ENCODE measurements at regions of chrX and their contacts with region 1.

Region 1: DNA sequence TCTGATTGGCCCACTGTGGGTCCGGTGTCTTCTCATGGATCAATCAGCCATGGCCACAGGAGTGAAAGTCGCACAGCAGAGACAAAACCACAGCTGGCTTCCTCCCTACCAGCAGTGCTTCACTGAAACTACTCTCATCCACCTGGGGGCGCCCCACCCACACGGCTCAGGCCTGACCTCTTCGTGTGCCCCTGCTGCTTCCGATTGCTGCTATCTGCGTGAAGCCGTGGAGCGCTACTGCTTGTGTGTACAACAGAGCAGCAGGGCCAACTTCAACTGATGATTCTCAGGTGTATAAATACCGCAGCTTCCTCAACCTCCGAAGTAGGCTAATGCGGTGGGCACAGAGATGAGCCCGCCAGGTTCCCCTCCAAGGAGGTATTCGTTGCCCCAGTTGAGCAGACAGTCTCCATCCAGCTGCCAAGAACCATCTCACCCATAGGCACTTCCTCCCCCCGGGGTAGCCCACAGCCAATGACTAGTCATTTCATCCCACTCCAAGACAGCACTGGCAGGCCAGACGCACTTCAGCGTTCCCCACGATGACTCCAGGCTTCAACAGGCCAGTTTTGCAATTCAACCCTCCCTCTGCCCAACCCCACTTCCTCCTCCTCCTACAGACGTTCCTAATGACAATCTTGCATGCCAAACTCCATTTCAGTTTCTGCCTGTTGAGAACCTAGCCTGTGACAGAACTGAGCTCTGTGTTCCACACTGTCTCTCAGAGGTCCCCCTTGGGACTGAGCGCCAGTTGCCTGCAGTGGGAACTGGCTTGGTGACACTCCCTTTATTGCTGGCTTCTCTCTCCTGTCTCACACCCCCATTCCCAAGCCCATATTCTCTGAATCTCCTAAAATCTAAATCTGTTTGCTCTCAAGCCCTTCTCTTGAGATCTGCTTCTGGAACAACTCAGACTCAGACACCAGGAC is 41.3 kb upstream of the ATP6AP2 start:
- DNase-seq: peak; percentile 68 to 78 (median 73)
- H3K4me3 ChIP-seq: no peak overlapping the region
- H3K4me3 Mint-ChIP-seq: peak overlapping the region in 7 of 8 donors; percentile 26 to 68 (median 56)
- H3K27ac ChIP-seq: no peak overlapping the region
- H3K27ac Mint-ChIP-seq: peak overlapping the region; percentile 29 to 87 (median 77)
- H3K4me1 ChIP-seq: peaks cover 12% of the 10 kb centered on the region
- H3K4me1 Mint-ChIP-seq: peaks cover 12 to 20% (median 17%) of the 10 kb centered on the region in 4 donors
- H3K27me3 ChIP-seq: no peaks in the 10 kb centered on the region
- H3K27me3 Mint-ChIP-seq: no peaks in the 10 kb centered on the region

Region 2: GRCh38 chrX:40552768-40553167 is 13.3 kb after region 1 on chrX:
- CTCF ChIA-PET with region 1: interaction called, 11 read pairs
- POLR2A ChIA-PET with region 1: no interaction called
- intact Hi-C with region 1: no loop called
- DNase-seq: no peak
- H3K4me3 ChIP-seq: no peak overlapping the region
- H3K4me3 Mint-ChIP-seq: no peak overlapping the region
- H3K27ac ChIP-seq: no peak overlapping the region
- H3K27ac Mint-ChIP-seq: no peak overlapping the region
- H3K4me1 ChIP-seq: no peaks in the 10 kb centered on the region
- H3K4me1 Mint-ChIP-seq: no peaks in the 10 kb centered on the region
- H3K27me3 ChIP-seq: no peaks in the 10 kb centered on the region
- H3K27me3 Mint-ChIP-seq: no peaks in the 10 kb centered on the region

Region 3: DNA sequence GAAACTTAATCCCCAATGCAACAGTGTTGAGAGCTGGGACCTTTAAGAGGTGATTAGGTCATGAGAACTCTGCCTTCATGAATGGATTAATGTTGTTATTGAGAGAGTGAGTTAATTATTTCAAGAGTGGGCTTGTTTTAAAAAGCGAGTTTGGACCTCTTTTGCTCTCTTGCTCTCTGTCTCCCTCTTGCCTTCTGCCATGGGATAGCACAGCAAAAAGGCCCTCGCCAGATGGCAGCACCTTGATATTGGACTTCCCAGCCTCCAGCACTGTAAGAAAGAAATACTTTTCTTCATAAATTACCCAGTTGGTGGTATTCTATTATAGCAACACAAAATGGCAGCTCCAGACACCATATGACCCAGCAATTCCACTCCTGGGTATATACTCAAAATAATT is 34.3 kb after region 1 on chrX:
- CTCF ChIA-PET with region 1: interaction called, 8 read pairs
- POLR2A ChIA-PET with region 1: no interaction called
- intact Hi-C with region 1: loop called (anchors 5 kb)
- DNase-seq: peak; percentile 23 to 51 (median 42)
- H3K4me3 ChIP-seq: no peak overlapping the region
- H3K4me3 Mint-ChIP-seq: no peak overlapping the region
- H3K27ac ChIP-seq: no peak overlapping the region
- H3K27ac Mint-ChIP-seq: no peak overlapping the region
- H3K4me1 ChIP-seq: no peaks in the 10 kb centered on the region
- H3K4me1 Mint-ChIP-seq: peaks cover 3 to 12% (median 7%) of the 10 kb centered on the region in 4 donors
- H3K27me3 ChIP-seq: no peaks in the 10 kb centered on the region
- H3K27me3 Mint-ChIP-seq: no peaks in the 10 kb centered on the region

Region 4: DNA sequence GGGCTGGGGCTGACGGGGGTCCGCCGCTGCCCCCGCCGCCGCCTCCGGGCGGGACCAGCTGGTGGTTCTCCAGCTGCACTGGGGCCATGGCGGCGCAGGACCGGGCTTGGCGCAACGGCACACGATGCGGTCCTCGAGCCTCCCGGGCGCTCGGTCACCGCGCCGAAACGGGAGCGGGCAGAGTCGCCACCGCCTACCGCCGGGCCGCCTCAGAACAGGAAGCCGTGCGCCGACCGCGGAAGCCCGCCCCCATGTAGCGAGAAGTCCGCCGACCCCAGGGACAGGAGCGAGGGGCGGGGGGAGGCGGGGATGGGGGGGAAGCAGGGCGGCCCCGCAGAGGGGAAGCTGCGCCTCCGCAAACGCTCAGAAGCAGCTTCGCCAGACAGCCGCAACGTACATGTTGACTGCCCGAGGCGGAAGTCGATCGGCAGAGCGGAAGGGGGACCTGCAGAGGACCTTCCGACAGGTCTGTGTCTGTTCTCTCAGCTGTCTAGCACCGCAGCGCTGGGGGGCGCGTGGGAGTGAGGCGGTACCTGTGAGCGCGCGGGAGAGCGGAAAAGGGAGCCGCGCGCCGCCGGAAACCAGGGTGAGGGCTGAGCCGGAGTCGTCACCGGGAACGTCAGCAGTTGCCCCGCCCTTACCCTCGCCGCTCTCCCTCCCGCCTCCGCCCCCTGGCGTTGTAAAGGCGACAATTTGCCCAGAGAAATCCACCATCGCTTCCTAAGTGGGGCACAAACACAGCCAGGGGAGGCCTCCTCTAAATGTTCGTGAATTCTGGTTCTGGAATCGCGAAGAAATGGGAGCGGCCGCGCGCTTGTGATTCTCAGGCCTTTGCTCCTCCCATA is 196.1 kb after region 1 on chrX and contains the start of gene MED14:
- CTCF ChIA-PET with region 1: interaction called, 3 read pairs
- POLR2A ChIA-PET with region 1: no interaction called
- intact Hi-C with region 1: loop called (anchors 1 kb)
- DNase-seq: peak; percentile 95 to 96 (median 96)
- H3K4me3 ChIP-seq: peak within 1 kb of the TSS; percentile 52 to 73
- H3K4me3 Mint-ChIP-seq: peak within 1 kb of the TSS; percentile 93 to 98 (median 97)
- H3K27ac ChIP-seq: peak within 1 kb of the TSS; percentile 94
- H3K27ac Mint-ChIP-seq: peak within 1 kb of the TSS; percentile 97 to 100 (median 99)
- H3K4me1 ChIP-seq: peaks cover 28% of the 10 kb centered on the region
- H3K4me1 Mint-ChIP-seq: peaks cover 23 to 76% (median 43%) of the 10 kb centered on the region in 4 donors
- H3K27me3 ChIP-seq: no peaks in the 10 kb centered on the region
- H3K27me3 Mint-ChIP-seq: no peaks in the 10 kb centered on the region
- total RNA-seq, gene MED14: 37.9 to 39.0 TPM

Region 5: GRCh38 chrX:40792433-40792832 is 253.0 kb after region 1 on chrX:
- CTCF ChIA-PET with region 1: interaction called, 43 read pairs
- POLR2A ChIA-PET with region 1: no interaction called
- intact Hi-C with region 1: loop called (anchors 1 kb)
- DNase-seq: no peak
- H3K4me3 ChIP-seq: no peak overlapping the region
- H3K4me3 Mint-ChIP-seq: no peak overlapping the region
- H3K27ac ChIP-seq: no peak overlapping the region
- H3K27ac Mint-ChIP-seq: no peak overlapping the region
- H3K4me1 ChIP-seq: no peaks in the 10 kb centered on the region
- H3K4me1 Mint-ChIP-seq: peaks cover 0 to 7% (median 3%) of the 10 kb centered on the region in 4 donors
- H3K27me3 ChIP-seq: no peaks in the 10 kb centered on the region
- H3K27me3 Mint-ChIP-seq: peaks cover 3 to 4% of the 10 kb centered on the region in 2 donors

Region 6: GRCh38 chrX:41116948-41117347 is 577.5 kb after region 1 on chrX:
- CTCF ChIA-PET with region 1: interaction called, 3 read pairs
- POLR2A ChIA-PET with region 1: no interaction called
- intact Hi-C with region 1: loop called (anchors 10 kb)
- DNase-seq: peak; percentile 44 to 57 (median 50)
- H3K4me3 ChIP-seq: no peak overlapping the region
- H3K4me3 Mint-ChIP-seq: peak overlapping the region; percentile 46 to 80 (median 62)
- H3K27ac ChIP-seq: peak overlapping the region; percentile 26
- H3K27ac Mint-ChIP-seq: peak overlapping the region; percentile 2 to 90 (median 59)
- H3K4me1 ChIP-seq: peaks cover 82% of the 10 kb centered on the region
- H3K4me1 Mint-ChIP-seq: peaks cover 45 to 81% (median 63%) of the 10 kb centered on the region in 4 donors
- H3K27me3 ChIP-seq: no peaks in the 10 kb centered on the region
- H3K27me3 Mint-ChIP-seq: no peaks in the 10 kb centered on the region

Region 7: DNA sequence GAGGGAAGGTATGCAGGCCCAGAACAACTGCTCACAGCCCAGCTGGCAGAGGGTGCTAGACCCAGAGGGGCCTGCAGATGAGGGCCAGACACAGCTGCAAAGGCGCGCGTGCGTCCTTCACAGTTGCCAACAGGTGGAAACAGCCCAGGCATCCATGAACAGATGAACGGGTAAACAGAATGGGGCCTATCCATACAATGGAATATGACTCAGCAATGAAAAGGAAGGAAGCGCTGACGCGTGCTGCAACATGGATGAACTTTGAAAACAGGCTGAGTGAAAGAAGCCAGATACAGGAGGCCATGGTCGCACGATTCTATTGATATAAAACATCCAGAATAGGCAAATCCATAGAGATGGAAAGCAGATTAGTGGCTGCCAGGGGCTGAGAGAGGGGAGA is 711.4 kb after region 1 on chrX:
- CTCF ChIA-PET with region 1: no interaction called
- POLR2A ChIA-PET with region 1: no interaction called
- intact Hi-C with region 1: loop called (anchors 5 kb)
- DNase-seq: no peak
- H3K4me3 ChIP-seq: no peak overlapping the region
- H3K4me3 Mint-ChIP-seq: peak overlapping the region in 2 of 8 donors; percentile 12 to 48
- H3K27ac ChIP-seq: no peak overlapping the region
- H3K27ac Mint-ChIP-seq: no peak overlapping the region
- H3K4me1 ChIP-seq: peaks cover 4% of the 10 kb centered on the region
- H3K4me1 Mint-ChIP-seq: peaks cover 3 to 13% (median 5%) of the 10 kb centered on the region in 4 donors
- H3K27me3 ChIP-seq: no peaks in the 10 kb centered on the region
- H3K27me3 Mint-ChIP-seq: peaks cover 0 to 2% of the 10 kb centered on the region in 2 donors

Measured in CD4-positive, alpha-beta memory T cell (primary cell).